CD4-positive, alpha-beta T cell (primary cell): ENCODE measurements at regions of chr21 and their contacts with region 1.

Region 1: DNA sequence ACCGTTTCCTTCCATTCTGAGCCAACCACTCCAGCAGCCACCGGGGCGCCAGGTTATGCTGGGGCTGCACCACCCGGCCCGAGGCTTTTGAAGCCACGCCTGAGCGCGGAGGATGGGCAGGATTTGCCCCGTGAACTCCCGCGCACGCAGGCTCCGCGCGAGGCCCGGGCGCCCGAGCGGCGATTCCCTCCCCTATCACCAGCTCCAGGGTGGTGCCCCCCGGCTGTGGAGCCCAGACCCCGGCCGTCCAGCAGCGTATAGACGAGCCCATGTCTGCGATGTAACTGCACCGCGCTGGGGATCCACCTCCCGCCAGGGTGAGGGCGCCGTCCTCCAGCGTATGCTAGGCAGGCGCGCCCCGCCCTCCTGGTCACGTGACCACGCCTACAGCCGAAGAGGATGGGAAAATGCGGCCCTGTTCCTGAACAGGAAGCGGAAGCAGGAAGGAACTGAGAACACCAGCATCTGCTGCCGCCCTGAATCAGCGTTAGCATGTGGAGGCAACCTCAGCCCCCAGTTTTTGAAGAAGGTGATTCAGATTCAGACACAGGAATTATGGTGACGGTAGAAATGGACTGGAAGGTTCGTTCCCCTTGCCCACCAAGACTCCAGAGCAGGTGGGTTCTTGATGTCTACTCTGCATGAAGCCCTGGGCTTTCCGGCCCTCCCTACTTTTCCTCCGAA is 46.0 kb downstream of the VPS26C start:
- DNase-seq: peak; percentile 83 to 97 (median 92)
- ATAC-seq: peak; percentile 81
- H3K4me3 ChIP-seq: peak overlapping the region; percentile 91
- H3K4me3 Mint-ChIP-seq: peak overlapping the region; percentile 86
- H3K27ac ChIP-seq: peak overlapping the region; percentile 84 to 86
- H3K27ac Mint-ChIP-seq: peak overlapping the region; percentile 90
- H3K4me1 ChIP-seq: peaks cover 49% of the 10 kb centered on the region
- H3K4me1 Mint-ChIP-seq: peaks cover 58% of the 10 kb centered on the region
- H3K27me3 ChIP-seq: no peaks in the 10 kb centered on the region
- H3K27me3 Mint-ChIP-seq: no peaks in the 10 kb centered on the region
- CTCF ChIP-seq: no peak

Region 2: GRCh38 chr21:37072988-37073416 is 148.1 kb before region 1 on chr21 and contains the starts of genes PIGP and TTC3:
- CTCF ChIA-PET with region 1: no interaction called
- POLR2A ChIA-PET with region 1: no interaction called
- intact Hi-C with region 1: loop called in 1 of 2 experiments (anchors 5 kb)
- DNase-seq: peak; percentile 92 to 99 (median 95)
- ATAC-seq: peak; percentile 64
- H3K4me3 ChIP-seq: peak within 1 kb of the TSS; percentile 88
- H3K4me3 Mint-ChIP-seq: peak within 1 kb of the TSS; percentile 98
- H3K27ac ChIP-seq: peak within 1 kb of the TSS; percentile 93
- H3K27ac Mint-ChIP-seq: peak within 1 kb of the TSS; percentile 94
- H3K4me1 ChIP-seq: peaks cover 22% of the 10 kb centered on the region
- H3K4me1 Mint-ChIP-seq: peaks cover 60% of the 10 kb centered on the region
- H3K27me3 ChIP-seq: no peaks in the 10 kb centered on the region
- H3K27me3 Mint-ChIP-seq: no peaks in the 10 kb centered on the region
- CTCF ChIP-seq: no peak
- total RNA-seq, gene PIGP: 11.1 to 14.8 TPM
- total RNA-seq, gene TTC3: 141 to 142 TPM

Region 3: GRCh38 chr21:37257967-37258877 is 37.1 kb after region 1 on chr21:
- CTCF ChIA-PET with region 1: interaction called, 4 read pairs
- POLR2A ChIA-PET with region 1: interaction called, 4 read pairs
- intact Hi-C with region 1: loop called in 1 of 2 experiments (anchors 2 kb)
- DNase-seq: peak; percentile 51 to 91 (median 69)
- ATAC-seq: peak; percentile 85
- H3K4me3 ChIP-seq: peak overlapping the region; percentile 63
- H3K4me3 Mint-ChIP-seq: peak overlapping the region; percentile 84
- H3K27ac ChIP-seq: peak overlapping the region; percentile 44
- H3K27ac Mint-ChIP-seq: peak overlapping the region; percentile 88
- H3K4me1 ChIP-seq: peaks cover 15% of the 10 kb centered on the region
- H3K4me1 Mint-ChIP-seq: peaks cover 45% of the 10 kb centered on the region
- H3K27me3 ChIP-seq: no peaks in the 10 kb centered on the region
- H3K27me3 Mint-ChIP-seq: no peaks in the 10 kb centered on the region
- CTCF ChIP-seq: no peak

Region 4: GRCh38 chr21:37267269-37268184 is 46.4 kb after region 1 on chr21 and contains the start of gene VPS26C:
- CTCF ChIA-PET with region 1: no interaction called
- POLR2A ChIA-PET with region 1: interaction called, 23 read pairs
- intact Hi-C with region 1: loop called (anchors 1 kb)
- DNase-seq: peak; percentile 94 to 100 (median 96)
- ATAC-seq: peak; percentile 84
- H3K4me3 ChIP-seq: peak within 1 kb of the TSS; percentile 90
- H3K4me3 Mint-ChIP-seq: peak within 1 kb of the TSS; percentile 93
- H3K27ac ChIP-seq: peak within 1 kb of the TSS; percentile 96 to 98
- H3K27ac Mint-ChIP-seq: peak within 1 kb of the TSS; percentile 97
- H3K4me1 ChIP-seq: peaks cover 19% of the 10 kb centered on the region
- H3K4me1 Mint-ChIP-seq: peaks cover 56% of the 10 kb centered on the region
- H3K27me3 ChIP-seq: no peaks in the 10 kb centered on the region
- H3K27me3 Mint-ChIP-seq: no peaks in the 10 kb centered on the region
- CTCF ChIP-seq: no peak
- total RNA-seq, gene VPS26C: 31.8 to 36.0 TPM

Region 5: DNA sequence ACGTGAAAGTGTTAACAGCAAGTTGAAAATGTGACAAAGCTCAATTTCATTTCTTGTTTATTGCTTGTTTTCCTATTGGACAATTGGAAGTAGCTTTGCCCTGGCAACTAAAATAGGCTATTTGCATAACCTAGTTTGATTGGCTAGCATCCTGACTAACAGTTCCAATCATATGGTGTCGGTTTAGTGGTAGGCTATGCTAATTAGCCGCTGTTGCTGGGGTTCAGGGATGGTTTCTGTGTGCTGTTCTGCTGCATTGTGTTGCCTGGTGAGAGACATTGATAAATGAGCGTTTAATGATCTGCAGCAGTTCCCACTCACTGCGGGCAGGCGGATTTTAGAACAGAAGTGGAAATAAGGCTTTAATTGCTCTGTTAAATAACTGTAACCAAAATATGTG is 214.0 kb after region 1 on chr21:
- CTCF ChIA-PET with region 1: no interaction called
- POLR2A ChIA-PET with region 1: no interaction called
- intact Hi-C with region 1: loop called in 1 of 2 experiments (anchors 10 kb)
- DNase-seq: peak in 9 of 14 experiments; percentile 12 to 85 (median 45)
- ATAC-seq: peak; percentile 99
- H3K4me3 ChIP-seq: no peak overlapping the region
- H3K4me3 Mint-ChIP-seq: no peak overlapping the region
- H3K27ac ChIP-seq: no peak overlapping the region
- H3K27ac Mint-ChIP-seq: no peak overlapping the region
- H3K4me1 ChIP-seq: peaks cover 23% of the 10 kb centered on the region
- H3K4me1 Mint-ChIP-seq: peaks cover 39% of the 10 kb centered on the region
- H3K27me3 ChIP-seq: no peaks in the 10 kb centered on the region
- H3K27me3 Mint-ChIP-seq: no peaks in the 10 kb centered on the region
- CTCF ChIP-seq: no peak

Region 6: GRCh38 chr21:37463083-37463801 is 242.1 kb after region 1 on chr21:
- CTCF ChIA-PET with region 1: no interaction called
- POLR2A ChIA-PET with region 1: no interaction called
- intact Hi-C with region 1: loop called in 1 of 2 experiments (anchors 5 kb)
- DNase-seq: peak in 5 of 14 experiments; percentile 24 to 65 (median 54)
- ATAC-seq: peak; percentile 49
- H3K4me3 ChIP-seq: no peak overlapping the region
- H3K4me3 Mint-ChIP-seq: peak overlapping the region; percentile 62
- H3K27ac ChIP-seq: no peak overlapping the region
- H3K27ac Mint-ChIP-seq: peak overlapping the region; percentile 66
- H3K4me1 ChIP-seq: peaks cover 32% of the 10 kb centered on the region
- H3K4me1 Mint-ChIP-seq: peaks cover 95% of the 10 kb centered on the region
- H3K27me3 ChIP-seq: no peaks in the 10 kb centered on the region
- H3K27me3 Mint-ChIP-seq: no peaks in the 10 kb centered on the region
- CTCF ChIP-seq: peak; percentile 53

Region 7: DNA sequence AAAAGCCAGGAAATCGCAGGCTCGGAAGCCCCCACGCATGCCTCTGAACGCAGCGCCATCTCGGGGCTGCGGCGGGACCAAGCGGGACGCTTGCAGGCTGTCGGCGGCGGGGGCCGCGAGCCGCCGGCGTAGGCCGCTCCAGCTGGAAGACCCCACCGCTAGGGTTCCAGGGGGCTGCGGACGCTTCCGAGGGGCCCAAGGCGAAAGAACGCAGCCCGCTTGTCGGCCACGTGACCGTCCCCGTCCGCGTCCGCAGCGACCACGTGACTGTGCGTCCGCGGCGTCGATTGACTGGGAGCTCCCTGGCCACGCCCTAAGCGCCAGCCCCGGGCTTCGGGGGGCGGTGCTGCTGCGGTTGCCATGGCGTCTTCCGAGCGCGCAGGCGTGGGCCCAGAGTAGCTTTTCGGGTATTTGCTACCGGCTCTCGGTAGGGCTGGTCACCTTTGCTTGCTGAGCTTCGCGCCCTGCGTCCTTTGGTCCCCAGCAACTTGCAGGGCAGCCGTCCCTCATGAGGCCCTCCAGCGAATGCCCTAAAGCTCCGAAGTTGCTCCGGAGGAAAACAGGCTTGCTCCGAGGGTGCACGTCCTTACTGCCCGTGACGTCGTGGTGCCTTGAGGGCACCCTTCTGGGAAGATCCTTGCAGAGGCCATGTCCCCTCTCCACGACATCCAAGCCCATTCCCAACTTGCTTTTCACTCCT is 342.7 kb after region 1 on chr21:
- CTCF ChIA-PET with region 1: interaction called, 4 read pairs
- POLR2A ChIA-PET with region 1: interaction called, 7 read pairs
- intact Hi-C with region 1: loop called (anchors 1 to 2 kb)
- DNase-seq: peak; percentile 76 to 97 (median 90)
- ATAC-seq: peak; percentile 77
- H3K4me3 ChIP-seq: peak overlapping the region; percentile 96
- H3K4me3 Mint-ChIP-seq: peak overlapping the region; percentile 95
- H3K27ac ChIP-seq: peak overlapping the region; percentile 88 to 97
- H3K27ac Mint-ChIP-seq: peak overlapping the region; percentile 98
- H3K4me1 ChIP-seq: peaks cover 28% of the 10 kb centered on the region
- H3K4me1 Mint-ChIP-seq: peaks cover 22% of the 10 kb centered on the region
- H3K27me3 ChIP-seq: no peaks in the 10 kb centered on the region
- H3K27me3 Mint-ChIP-seq: no peaks in the 10 kb centered on the region
- CTCF ChIP-seq: peak; percentile 50